Left lung (tissue), 14 donors: ENCODE measurements at regions of chr16 and their contacts with region 1.

Region 1: DNA sequence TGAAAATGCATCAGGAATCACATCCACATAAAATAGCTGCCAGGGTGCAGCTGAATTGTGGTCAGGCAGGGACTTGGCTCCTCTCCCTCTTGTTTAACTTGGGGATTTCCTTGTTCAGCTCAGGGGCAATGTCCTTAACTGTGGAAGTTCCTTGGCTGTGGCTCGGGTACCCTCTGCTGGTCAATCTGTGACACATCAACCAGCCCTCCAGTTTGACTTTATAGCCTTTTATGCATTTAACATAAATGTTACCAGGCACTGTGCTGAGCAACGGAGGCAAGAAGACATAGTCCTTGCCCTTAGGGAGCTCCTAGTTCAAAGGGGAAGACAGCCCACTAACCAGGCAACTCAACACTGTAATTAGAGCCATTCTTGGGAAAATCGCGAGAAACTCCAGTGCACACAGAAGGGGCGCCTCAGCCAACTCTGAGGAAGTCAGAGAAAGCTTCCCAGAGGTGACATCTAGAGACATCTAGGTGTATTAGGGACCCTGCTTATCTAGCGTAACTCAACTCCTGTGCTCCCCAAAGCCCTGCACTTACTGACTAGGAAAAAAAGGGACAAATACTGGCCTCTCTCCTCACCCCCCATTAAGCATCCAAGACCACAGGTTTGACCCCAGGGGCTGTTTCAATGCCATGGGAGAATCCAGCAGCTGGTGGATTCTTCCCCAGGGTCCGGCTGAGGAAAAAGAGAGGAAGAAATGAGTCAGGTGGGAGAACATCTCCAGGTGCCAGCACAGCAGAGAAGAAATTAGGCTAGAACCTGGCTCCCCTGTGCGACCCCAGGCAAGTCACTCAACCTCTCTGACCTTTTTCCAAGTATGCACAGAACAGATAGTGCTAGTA is 17.3 kb upstream of the EEF2K start:
- DNase-seq: peak in 3 of 4 donors; percentile 72 to 89 (median 73)
- ATAC-seq: peak; percentile 3
- H3K4me3 ChIP-seq: no peak overlapping the region
- H3K27ac ChIP-seq: peak overlapping the region; percentile 93 to 97
- H3K4me1 ChIP-seq: peaks cover 20 to 36% of the 10 kb centered on the region in 2 donors
- H3K27me3 ChIP-seq: no peaks in the 10 kb centered on the region
- CTCF ChIP-seq: peak; percentile 81 to 84

Region 2: GRCh38 chr16:22007509-22008214 is 181.2 kb before region 1 on chr16 and contains the start of gene MOSMO:
- intact Hi-C with region 1: loop called in 1 of 2 experiments (anchors 10 kb)
- DNase-seq: peak; percentile 53 to 95 (median 70)
- ATAC-seq: peak; percentile 94
- H3K4me3 ChIP-seq: peak within 1 kb of the TSS; percentile 87 to 88
- H3K27ac ChIP-seq: peak within 1 kb of the TSS; percentile 69 to 87
- H3K4me1 ChIP-seq: peaks cover 8 to 28% of the 10 kb centered on the region in 2 donors
- H3K27me3 ChIP-seq: no peaks in the 10 kb centered on the region
- CTCF ChIP-seq: no peak
- polyA plus RNA-seq, gene MOSMO: 24.7 to 31.0 (median 27.0) TPM

Region 3: DNA sequence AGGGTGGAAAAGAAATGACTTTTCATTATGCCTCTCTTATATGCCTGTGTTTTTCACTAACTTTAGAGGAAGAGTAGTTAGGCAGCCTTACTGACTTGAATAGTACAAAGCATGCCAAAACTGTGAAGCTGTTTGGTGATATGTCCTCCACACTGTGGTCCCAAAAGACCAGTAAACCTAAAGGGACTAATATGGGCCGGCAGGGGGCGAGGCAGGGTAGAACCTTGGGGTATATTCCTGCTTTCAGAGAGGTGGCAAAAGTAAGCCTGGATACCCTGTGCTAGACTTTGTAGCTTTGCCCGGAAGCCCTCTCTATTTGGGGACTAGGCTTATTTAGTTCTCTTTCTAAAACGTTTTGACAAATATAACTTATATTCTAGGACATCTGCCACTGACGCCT is 132.9 kb before region 1 on chr16:
- intact Hi-C with region 1: no loop called
- DNase-seq: no peak
- ATAC-seq: no peak
- H3K4me3 ChIP-seq: no peak overlapping the region
- H3K27ac ChIP-seq: no peak overlapping the region
- H3K4me1 ChIP-seq: no peaks in the 10 kb centered on the region
- H3K27me3 ChIP-seq: no peaks in the 10 kb centered on the region
- CTCF ChIP-seq: no peak